Activated CD4-positive, alpha-beta memory T cell treated with anti-CD3 and anti-CD28 coated beads, Interleukin-2, amount 10 ng/mL, durations not matched to agents 7 days and 5 days (primary cell): ENCODE measurements at regions of chr1 and their contacts with region 1.

Region 1: GRCh38 chr1:24955161-24955560 is 25.1 kb upstream of the RUNX3 start:
- DNase-seq: peak; percentile 88
- H3K4me3 Mint-ChIP-seq: peak overlapping the region; percentile 75
- H3K27ac Mint-ChIP-seq: peak overlapping the region; percentile 96
- H3K4me1 Mint-ChIP-seq: peaks cover 96% of the 10 kb centered on the region
- H3K27me3 Mint-ChIP-seq: no peaks in the 10 kb centered on the region

Region 2: GRCh38 chr1:25031966-25032667 is 77.0 kb after region 1 on chr1:
- CTCF ChIA-PET with region 1: interaction called, 42 read pairs
- POLR2A ChIA-PET with region 1: interaction called, 19 read pairs
- DNase-seq: peak; percentile 70
- H3K4me3 Mint-ChIP-seq: peak overlapping the region; percentile 72
- H3K27ac Mint-ChIP-seq: peak overlapping the region; percentile 93
- H3K4me1 Mint-ChIP-seq: peaks cover 73% of the 10 kb centered on the region
- H3K27me3 Mint-ChIP-seq: no peaks in the 10 kb centered on the region

Region 3: DNA sequence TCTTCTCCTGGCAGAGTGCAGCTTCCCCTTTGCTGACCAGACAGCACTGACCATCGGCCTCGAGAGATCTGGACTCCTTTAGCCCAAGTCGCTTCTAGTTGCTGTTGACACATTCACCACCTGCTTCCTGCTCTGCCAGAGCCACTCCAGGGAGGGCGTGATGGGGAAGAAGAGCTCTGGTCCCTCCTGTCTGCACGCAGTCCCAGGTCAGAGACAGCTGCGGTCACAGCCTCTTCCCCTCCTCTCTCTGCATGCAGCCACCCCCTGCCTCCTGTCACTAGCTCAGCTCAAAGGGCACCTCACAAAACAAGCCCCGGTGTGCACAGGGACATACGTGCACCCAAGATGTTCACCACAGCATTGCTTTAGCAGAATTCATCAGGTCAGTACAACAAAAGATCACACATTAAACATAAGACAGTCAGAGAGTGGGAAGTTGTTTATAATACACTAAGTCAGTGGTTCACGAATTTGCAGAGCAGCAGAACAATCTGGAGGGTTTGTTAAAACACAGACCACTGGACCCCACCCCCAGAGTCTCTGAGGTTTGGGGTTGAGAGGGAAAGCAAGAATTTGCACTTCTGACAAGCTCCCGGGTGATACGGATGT is 144.3 kb after region 1 on chr1:
- CTCF ChIA-PET with region 1: interaction called, 18 read pairs
- POLR2A ChIA-PET with region 1: interaction called, 4 read pairs
- DNase-seq: peak; percentile 54
- H3K4me3 Mint-ChIP-seq: no peak overlapping the region
- H3K27ac Mint-ChIP-seq: peak overlapping the region; percentile 71
- H3K4me1 Mint-ChIP-seq: peaks cover 73% of the 10 kb centered on the region
- H3K27me3 Mint-ChIP-seq: peaks cover 24% of the 10 kb centered on the region

Region 4: GRCh38 chr1:25134801-25135461 is 179.8 kb after region 1 on chr1:
- CTCF ChIA-PET with region 1: no interaction called
- POLR2A ChIA-PET with region 1: no interaction called
- DNase-seq: no peak
- H3K4me3 Mint-ChIP-seq: no peak overlapping the region
- H3K27ac Mint-ChIP-seq: no peak overlapping the region
- H3K4me1 Mint-ChIP-seq: no peaks in the 10 kb centered on the region
- H3K27me3 Mint-ChIP-seq: peaks cover 44% of the 10 kb centered on the region